GM23248 (cell line): ENCODE measurements at regions of chr5 and their contacts with region 1.

Region 1: GRCh38 chr5:120463991-120464626 is at the start of gene PRR16:
- DNase-seq: peak; percentile 93
- H3K4me3 ChIP-seq: peak within 1 kb of the TSS; percentile 95
- H3K27ac ChIP-seq: peak within 1 kb of the TSS; percentile 60
- H3K4me1 ChIP-seq: peaks cover 34% of the 10 kb centered on the region
- H3K27me3 ChIP-seq: no peaks in the 10 kb centered on the region
- total RNA-seq, gene PRR16: 32.5 and 33.0 TPM in 2 replicates

Region 2: GRCh38 chr5:120803282-120803681 is 339.2 kb after region 1 on chr5:
- in situ Hi-C with region 1: loop called (anchors 10 kb)
- DNase-seq: peak; percentile 63
- H3K4me3 ChIP-seq: peak overlapping the region; percentile 64
- H3K27ac ChIP-seq: no peak overlapping the region
- H3K4me1 ChIP-seq: peaks cover 21% of the 10 kb centered on the region
- H3K27me3 ChIP-seq: no peaks in the 10 kb centered on the region